ENCODE measurements at regions of chr7 and their contacts with region 1.

Region 1: GRCh38 chr7:66557608-66558143 is 71.0 kb upstream of the KCTD7 start:
- DNase-seq: peak; percentile 62 to 85
- H3K4me3 ChIP-seq: no peak overlapping the region
- H3K4me3 Mint-ChIP-seq: no peak overlapping the region
- H3K27ac Mint-ChIP-seq: peak overlapping the region; percentile 48
- H3K4me1 ChIP-seq: no peaks in the 10 kb centered on the region
- H3K4me1 Mint-ChIP-seq: no peaks in the 10 kb centered on the region
- H3K27me3 ChIP-seq: no peaks in the 10 kb centered on the region
- H3K27me3 Mint-ChIP-seq: no peaks in the 10 kb centered on the region
- CTCF ChIP-seq: peak; percentile 94 to 95

Region 2: GRCh38 chr7:66326501-66327180 is 231.0 kb before region 1 on chr7:
- CTCF ChIA-PET with region 1: no interaction called
- POLR2A ChIA-PET with region 1: no interaction called
- intact Hi-C with region 1: no loop called
- DNase-seq: peak; percentile 25 to 45
- H3K4me3 ChIP-seq: no peak overlapping the region
- H3K4me3 Mint-ChIP-seq: peak overlapping the region; percentile 0
- H3K27ac Mint-ChIP-seq: no peak overlapping the region
- H3K4me1 ChIP-seq: peaks cover 14% of the 10 kb centered on the region
- H3K4me1 Mint-ChIP-seq: peaks cover 25% of the 10 kb centered on the region
- H3K27me3 ChIP-seq: no peaks in the 10 kb centered on the region
- H3K27me3 Mint-ChIP-seq: no peaks in the 10 kb centered on the region
- CTCF ChIP-seq: no peak

Region 3: DNA sequence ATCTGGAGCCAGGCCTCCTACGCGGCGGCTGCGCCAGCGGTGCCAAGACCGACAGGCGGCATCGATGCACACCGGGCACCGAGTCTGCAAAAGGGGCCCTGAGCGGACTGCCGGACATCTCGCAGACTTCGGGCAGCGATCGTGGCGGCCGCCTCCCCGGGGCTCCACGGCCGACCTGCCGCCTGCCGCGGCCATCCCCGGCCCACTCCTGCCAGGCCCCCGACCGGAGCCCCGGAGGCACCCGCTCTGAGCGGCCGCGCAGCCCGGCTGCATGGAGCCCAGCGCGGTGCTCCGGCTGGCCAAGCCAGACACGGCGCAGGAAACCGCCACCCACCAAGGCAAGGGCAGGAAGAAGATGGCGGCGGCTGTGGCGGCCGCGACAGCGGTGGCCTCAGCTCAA is 83.2 kb before region 1 on chr7:
- CTCF ChIA-PET with region 1: no interaction called
- POLR2A ChIA-PET with region 1: no interaction called
- intact Hi-C with region 1: no loop called
- DNase-seq: no peak
- H3K4me3 ChIP-seq: no peak overlapping the region
- H3K4me3 Mint-ChIP-seq: no peak overlapping the region
- H3K27ac Mint-ChIP-seq: no peak overlapping the region
- H3K4me1 ChIP-seq: no peaks in the 10 kb centered on the region
- H3K4me1 Mint-ChIP-seq: no peaks in the 10 kb centered on the region
- H3K27me3 ChIP-seq: no peaks in the 10 kb centered on the region
- H3K27me3 Mint-ChIP-seq: no peaks in the 10 kb centered on the region
- CTCF ChIP-seq: no peak

Region 4: DNA sequence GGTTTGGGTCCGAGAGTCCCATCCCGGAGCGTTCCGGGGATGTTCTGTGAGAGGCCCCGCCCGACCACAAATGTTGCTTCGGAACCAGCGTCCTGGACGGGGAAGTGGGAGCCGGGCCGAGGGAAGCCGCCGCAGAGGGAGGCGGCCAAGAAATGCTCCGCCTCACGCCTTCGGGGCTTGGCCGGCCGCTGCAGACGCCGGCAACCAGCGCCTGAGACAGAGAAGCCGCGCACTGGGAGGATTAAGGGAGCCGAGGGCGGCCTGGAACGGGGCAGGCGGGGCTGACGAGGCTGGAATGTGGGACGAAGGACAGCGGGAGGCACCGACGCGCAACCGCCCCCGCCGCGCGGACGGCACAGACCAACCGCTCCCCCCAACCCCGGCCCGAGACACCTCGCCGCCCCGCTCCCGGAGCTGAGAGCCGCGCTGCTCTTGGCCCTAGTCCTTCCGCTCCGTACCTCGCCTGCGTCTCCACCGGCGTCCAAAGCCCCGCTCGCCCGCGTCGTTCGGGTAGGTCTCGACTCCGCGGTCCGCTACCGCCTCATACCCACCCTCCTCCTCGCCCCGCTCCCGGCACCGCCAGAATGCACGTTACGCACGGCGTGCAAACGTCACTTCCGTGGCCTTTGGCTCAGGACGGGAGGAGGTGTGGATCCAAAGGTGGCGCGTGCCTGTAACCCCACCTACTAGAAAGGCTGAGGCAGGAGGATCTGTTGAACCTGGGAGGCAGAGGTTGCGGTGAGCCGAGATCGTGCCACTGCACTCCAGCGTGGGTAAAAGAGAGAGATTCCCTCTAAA is 34.3 kb after region 1 on chr7:
- CTCF ChIA-PET with region 1: no interaction called
- POLR2A ChIA-PET with region 1: no interaction called
- intact Hi-C with region 1: no loop called
- DNase-seq: peak; percentile 94 to 95
- H3K4me3 ChIP-seq: peak overlapping the region; percentile 99
- H3K4me3 Mint-ChIP-seq: peak overlapping the region; percentile 97
- H3K27ac Mint-ChIP-seq: peak overlapping the region; percentile 99
- H3K4me1 ChIP-seq: peaks cover 7% of the 10 kb centered on the region; the same call in 1 of the 2 replicates
- H3K4me1 Mint-ChIP-seq: peaks cover 25% of the 10 kb centered on the region
- H3K27me3 ChIP-seq: no peaks in the 10 kb centered on the region
- H3K27me3 Mint-ChIP-seq: no peaks in the 10 kb centered on the region
- CTCF ChIP-seq: no peak

Region 5: DNA sequence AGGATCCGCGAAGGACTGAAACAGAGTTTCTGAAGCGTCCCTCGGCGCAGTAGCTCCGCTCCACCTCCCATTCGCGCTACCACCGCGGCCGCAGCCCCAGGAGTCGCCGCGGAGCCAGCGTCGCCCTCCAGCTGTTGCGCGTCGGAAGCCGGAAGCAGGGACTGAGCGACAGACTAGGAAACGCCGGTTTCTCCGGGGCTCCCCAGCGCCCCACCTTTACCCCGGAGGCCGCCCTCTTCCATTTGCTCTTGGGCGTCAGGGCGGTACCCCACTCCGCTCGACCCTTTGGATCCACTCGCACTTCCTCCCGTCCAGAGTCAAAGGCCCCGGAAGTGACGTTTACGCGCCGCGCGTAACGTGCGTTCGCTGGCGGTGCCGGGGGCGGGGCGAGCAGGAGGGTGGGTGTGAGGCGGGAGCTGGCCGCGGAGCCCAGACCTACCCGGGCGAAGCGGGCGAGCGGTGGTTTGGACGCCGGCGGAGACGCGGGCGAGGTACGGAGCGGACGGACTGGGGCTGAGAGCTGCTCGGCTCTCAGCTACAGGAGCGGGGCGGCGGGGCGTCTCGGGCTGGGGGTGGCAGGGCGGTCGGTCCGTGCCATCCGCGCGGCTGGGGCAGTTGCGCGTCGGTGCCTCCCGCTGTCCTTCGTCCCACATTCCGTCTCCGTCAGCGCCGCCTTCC is 182.8 kb after region 1 on chr7 and contains the start of gene RABGEF1:
- CTCF ChIA-PET with region 1: no interaction called
- POLR2A ChIA-PET with region 1: no interaction called
- intact Hi-C with region 1: loop called (anchors 5 kb)
- DNase-seq: peak; percentile 97 to 98
- H3K4me3 ChIP-seq: peak within 1 kb of the TSS; percentile 100
- H3K4me3 Mint-ChIP-seq: peak within 1 kb of the TSS; percentile 95
- H3K27ac Mint-ChIP-seq: peak within 1 kb of the TSS; percentile 96
- H3K4me1 ChIP-seq: peaks cover 4% of the 10 kb centered on the region; the same call in 1 of the 2 replicates
- H3K4me1 Mint-ChIP-seq: peaks cover 6% of the 10 kb centered on the region
- H3K27me3 ChIP-seq: no peaks in the 10 kb centered on the region
- H3K27me3 Mint-ChIP-seq: no peaks in the 10 kb centered on the region
- CTCF ChIP-seq: no peak
- total RNA-seq, gene RABGEF1: 20.3 and 21.2 TPM in 2 replicates

Measured in Caco-2 (cell line).